Endothelial cell of umbilical vein (primary cell): ENCODE measurements at regions of chr17 and their contacts with region 1.

Region 1: DNA sequence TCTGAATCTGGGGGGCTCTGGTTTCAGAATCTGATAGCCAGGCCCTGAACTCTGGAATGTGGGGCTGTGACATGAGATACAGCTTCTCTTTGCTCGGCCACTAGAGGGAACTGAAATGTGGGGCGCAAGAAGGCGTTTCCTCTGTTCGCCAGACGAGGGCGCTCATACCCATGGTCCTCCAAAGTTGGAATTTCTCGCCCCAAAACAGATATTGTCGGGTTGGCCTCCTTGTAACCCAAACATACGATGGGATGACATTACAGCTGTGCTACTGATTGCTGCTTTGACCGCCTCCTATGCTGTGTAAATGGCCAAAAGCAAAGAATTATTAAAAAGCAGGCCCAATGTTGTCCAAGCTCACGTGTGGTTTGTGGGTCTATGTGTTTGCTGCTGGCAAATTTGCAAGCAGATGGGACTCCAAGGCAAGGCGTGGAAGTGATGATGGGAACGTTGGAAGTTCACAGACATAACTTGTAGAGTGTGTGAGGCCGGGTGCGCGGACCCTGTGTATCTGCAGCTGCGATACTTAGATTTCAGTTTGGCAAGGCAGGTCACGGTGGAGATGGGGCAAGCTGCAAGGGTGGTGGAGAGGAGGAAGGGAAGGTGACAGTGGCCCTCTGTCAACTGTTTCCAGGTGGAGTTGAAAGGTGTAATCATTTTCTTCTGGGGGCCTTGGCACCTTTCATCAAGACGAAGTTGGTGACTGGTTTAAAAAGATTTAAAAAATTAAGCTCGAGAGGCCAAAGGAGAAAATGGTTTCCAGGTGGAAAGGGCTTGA is 13.0 kb upstream of the MSI2 start:
- DNase-seq: peak; percentile 66
- H3K4me3 ChIP-seq: no peak overlapping the region
- H3K27ac ChIP-seq: no peak overlapping the region
- H3K4me1 ChIP-seq: no peaks in the 10 kb centered on the region
- H3K27me3 ChIP-seq: peaks cover 13 to 16% of the 10 kb centered on the region in 2 experiments
- CTCF ChIP-seq: peak; percentile 100
- POLR2A ChIP-seq: no peak

Region 2: GRCh38 chr17:56727876-56728620 is 515.3 kb before region 1 on chr17:
- CTCF ChIA-PET with region 1: no interaction called
- POLR2A ChIA-PET with region 1: no interaction called
- dilution Hi-C with region 1: no loop called
- intact Hi-C with region 1: no loop called
- DNase-seq: no peak
- H3K4me3 ChIP-seq: no peak overlapping the region
- H3K27ac ChIP-seq: no peak overlapping the region
- H3K4me1 ChIP-seq: no peaks in the 10 kb centered on the region
- H3K27me3 ChIP-seq: no peaks in the 10 kb centered on the region
- CTCF ChIP-seq: no peak
- POLR2A ChIP-seq: no peak

Region 3: GRCh38 chr17:57138976-57139554 is 104.3 kb before region 1 on chr17:
- CTCF ChIA-PET with region 1: interaction called, 24 read pairs
- POLR2A ChIA-PET with region 1: no interaction called
- dilution Hi-C with region 1: no loop called
- intact Hi-C with region 1: no loop called
- DNase-seq: no peak
- H3K4me3 ChIP-seq: no peak overlapping the region
- H3K27ac ChIP-seq: no peak overlapping the region
- H3K4me1 ChIP-seq: no peaks in the 10 kb centered on the region
- H3K27me3 ChIP-seq: no peaks in the 10 kb centered on the region
- CTCF ChIP-seq: no peak
- POLR2A ChIP-seq: no peak

Region 4: GRCh38 chr17:57255776-57256681 is 12.7 kb after region 1 on chr17 and contains the start of gene MSI2:
- CTCF ChIA-PET with region 1: interaction called, 62 read pairs
- POLR2A ChIA-PET with region 1: no interaction called
- dilution Hi-C with region 1: no loop called
- intact Hi-C with region 1: loop called (anchors 2 kb)
- DNase-seq: peak; percentile 59
- H3K4me3 ChIP-seq: peak within 1 kb of the TSS; percentile 85 to 99 (median 97)
- H3K27ac ChIP-seq: peak within 1 kb of the TSS; percentile 21
- H3K4me1 ChIP-seq: peaks cover 12% of the 10 kb centered on the region
- H3K27me3 ChIP-seq: peaks cover 0 to 2% of the 10 kb centered on the region in 2 experiments
- CTCF ChIP-seq: no peak
- POLR2A ChIP-seq: no peak
- total RNA-seq, gene MSI2: 59.3 and 62.7 TPM in 2 replicates

Region 5: GRCh38 chr17:57323391-57323790 is 80.0 kb after region 1 on chr17:
- CTCF ChIA-PET with region 1: no interaction called
- POLR2A ChIA-PET with region 1: no interaction called
- dilution Hi-C with region 1: no loop called
- intact Hi-C with region 1: no loop called
- DNase-seq: no peak
- H3K4me3 ChIP-seq: no peak overlapping the region
- H3K27ac ChIP-seq: no peak overlapping the region
- H3K4me1 ChIP-seq: no peaks in the 10 kb centered on the region
- H3K27me3 ChIP-seq: no peaks in the 10 kb centered on the region
- CTCF ChIP-seq: no peak
- POLR2A ChIP-seq: no peak

Region 6: GRCh38 chr17:57422574-57423164 is 179.3 kb after region 1 on chr17:
- CTCF ChIA-PET with region 1: interaction called, 13 read pairs
- POLR2A ChIA-PET with region 1: no interaction called
- dilution Hi-C with region 1: no loop called
- intact Hi-C with region 1: no loop called
- DNase-seq: no peak
- H3K4me3 ChIP-seq: no peak overlapping the region
- H3K27ac ChIP-seq: no peak overlapping the region
- H3K4me1 ChIP-seq: peaks cover 23% of the 10 kb centered on the region
- H3K27me3 ChIP-seq: no peaks in the 10 kb centered on the region
- CTCF ChIP-seq: no peak
- POLR2A ChIP-seq: no peak

Region 7: DNA sequence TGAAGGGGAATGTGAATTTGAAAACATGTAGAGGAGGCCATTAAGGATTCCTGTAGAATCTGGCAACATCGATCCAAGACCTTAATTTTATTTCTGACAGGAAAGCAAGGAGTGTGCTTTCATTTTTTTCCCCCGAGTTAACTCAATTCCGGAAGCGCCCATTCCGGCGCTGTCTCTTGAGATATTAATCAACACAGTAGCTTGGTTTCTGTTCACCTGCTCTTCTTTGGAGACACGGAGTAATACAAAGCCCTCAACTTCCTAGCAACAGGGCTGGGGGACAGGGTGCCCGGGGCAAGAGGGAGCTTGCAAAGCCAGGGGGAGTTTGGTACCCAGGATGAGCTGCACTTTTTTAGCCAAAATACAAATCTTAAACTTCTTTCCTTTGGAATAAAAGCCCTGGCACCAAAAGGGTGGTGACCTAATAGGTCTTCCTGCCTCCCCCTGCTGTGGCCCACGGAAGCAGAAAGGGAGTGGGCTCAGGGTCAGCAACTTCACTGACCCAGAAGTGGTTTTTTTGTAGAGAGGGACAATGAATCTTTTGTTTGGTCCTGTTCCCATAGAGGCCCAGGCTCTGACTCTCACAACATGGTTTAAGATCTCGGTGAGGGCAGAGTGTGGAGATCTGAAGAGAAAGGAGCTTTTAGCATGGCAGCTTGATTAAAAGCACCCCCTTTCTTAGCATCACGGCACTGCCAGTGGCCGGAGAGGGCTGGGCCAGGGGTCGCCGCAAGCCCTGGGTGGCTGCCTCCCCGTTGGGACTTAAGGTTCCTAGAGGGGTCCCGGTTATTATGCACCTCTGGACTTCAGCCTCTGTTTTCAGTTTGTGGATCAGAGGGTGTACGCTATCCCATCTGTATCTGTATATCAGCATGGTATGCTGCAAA is 294.4 kb after region 1 on chr17:
- CTCF ChIA-PET with region 1: interaction called, 17 read pairs
- POLR2A ChIA-PET with region 1: no interaction called
- dilution Hi-C with region 1: no loop called
- intact Hi-C with region 1: no loop called
- DNase-seq: peak; percentile 13
- H3K4me3 ChIP-seq: no peak overlapping the region
- H3K27ac ChIP-seq: no peak overlapping the region
- H3K4me1 ChIP-seq: peaks cover 6% of the 10 kb centered on the region
- H3K27me3 ChIP-seq: no peaks in the 10 kb centered on the region
- CTCF ChIP-seq: no peak
- POLR2A ChIP-seq: no peak

Region 8: GRCh38 chr17:57622683-57623433 is 379.5 kb after region 1 on chr17:
- CTCF ChIA-PET with region 1: interaction called, 14 read pairs
- POLR2A ChIA-PET with region 1: no interaction called
- dilution Hi-C with region 1: no loop called
- intact Hi-C with region 1: no loop called
- DNase-seq: peak; percentile 39
- H3K4me3 ChIP-seq: no peak overlapping the region
- H3K27ac ChIP-seq: peak overlapping the region; percentile 26
- H3K4me1 ChIP-seq: peaks cover 13% of the 10 kb centered on the region
- H3K27me3 ChIP-seq: no peaks in the 10 kb centered on the region
- CTCF ChIP-seq: no peak
- POLR2A ChIP-seq: no peak

Region 9: DNA sequence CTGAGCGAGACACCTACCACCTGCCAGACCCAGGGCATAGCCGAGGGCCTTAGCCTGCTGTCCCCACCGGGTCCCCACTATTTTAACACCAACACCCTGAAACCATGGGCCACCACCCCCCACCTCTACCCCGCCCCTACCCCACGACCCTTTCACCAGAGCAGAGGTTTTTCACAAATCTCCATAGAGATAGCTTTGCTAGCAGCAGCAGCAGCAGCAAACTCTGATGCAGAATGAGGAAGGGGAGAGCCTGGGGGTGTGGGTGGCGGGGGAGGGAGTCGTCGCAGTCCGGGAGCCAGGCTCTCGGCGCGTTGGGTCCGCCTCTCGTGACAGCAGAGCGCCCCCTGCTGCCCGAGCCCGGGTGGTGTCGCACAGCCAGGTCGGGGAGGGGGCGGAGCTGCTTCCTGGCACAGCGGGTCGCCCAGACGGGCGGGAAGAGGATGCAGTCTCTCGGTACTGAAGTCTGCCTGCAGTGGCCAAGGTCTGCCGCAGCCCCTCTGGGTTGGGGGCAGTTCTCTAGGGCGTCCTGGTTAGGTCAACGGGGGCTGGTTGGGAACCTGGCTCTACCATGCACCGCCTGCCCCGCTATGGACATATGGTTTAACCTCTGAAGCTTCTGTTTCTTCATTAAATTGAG is 539.9 kb after region 1 on chr17:
- CTCF ChIA-PET with region 1: interaction called, 73 read pairs
- POLR2A ChIA-PET with region 1: no interaction called
- dilution Hi-C with region 1: no loop called
- intact Hi-C with region 1: loop called (anchors 2 kb)
- DNase-seq: peak; percentile 59
- H3K4me3 ChIP-seq: no peak overlapping the region
- H3K27ac ChIP-seq: no peak overlapping the region
- H3K4me1 ChIP-seq: no peaks in the 10 kb centered on the region
- H3K27me3 ChIP-seq: peaks cover 15 to 21% of the 10 kb centered on the region in 2 experiments
- CTCF ChIP-seq: peak; percentile 95 to 99
- POLR2A ChIP-seq: no peak